ENCODE measurements at regions of chr10 and their contacts with region 1.

Region 1: DNA sequence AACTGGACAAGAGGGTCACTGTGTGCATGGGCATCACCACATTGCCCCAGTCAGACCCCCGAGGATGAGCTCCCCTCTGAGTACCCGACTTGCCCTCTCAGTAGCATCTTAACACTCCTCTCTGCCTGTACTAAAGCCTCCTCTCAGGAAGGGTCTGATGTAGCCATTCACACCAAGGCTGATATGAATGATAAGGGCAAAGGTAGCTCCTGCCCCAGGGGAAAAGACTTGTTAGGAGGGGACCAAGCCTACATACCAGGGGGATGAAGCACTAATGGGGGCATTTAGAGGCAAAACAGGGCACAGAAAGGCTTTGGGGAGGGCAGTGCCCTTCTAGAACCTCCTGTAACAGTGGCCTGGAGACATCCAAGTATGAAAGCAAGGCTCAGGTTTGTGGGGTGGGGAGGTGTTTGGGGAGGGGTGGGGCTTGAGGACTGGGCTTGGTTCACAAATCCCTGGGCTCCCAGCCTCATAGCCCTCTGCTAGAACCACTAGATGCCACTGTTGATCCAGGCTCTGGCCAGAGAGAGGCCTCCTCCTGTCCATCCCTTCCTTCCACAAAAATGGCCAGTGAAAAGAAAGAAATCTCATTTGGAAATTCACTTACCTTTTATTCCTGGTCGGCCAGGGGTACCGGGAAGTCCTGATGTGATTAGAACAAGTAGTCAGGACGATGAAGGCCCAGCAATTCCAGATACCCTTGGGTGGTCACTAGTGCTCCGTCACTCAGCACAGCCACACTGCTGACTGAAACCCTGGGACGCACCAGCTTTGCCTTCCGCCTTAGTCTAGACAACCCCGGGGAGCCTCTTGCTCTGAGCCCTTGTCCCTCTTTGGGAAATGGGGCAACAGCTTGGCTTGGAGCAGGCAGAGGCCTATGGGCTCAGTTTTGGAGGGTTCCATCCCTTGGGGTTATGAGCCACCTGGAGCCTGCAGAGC is 40.3 kb downstream of the COL17A1 start:
- DNase-seq: peak in 8 of 10 donors; percentile 25 to 74 (median 65)
- H3K4me3 ChIP-seq: no peak overlapping the region
- H3K27ac ChIP-seq: peak overlapping the region in 27 of 59 donors; percentile 3 to 76 (median 42)
- H3K27me3 ChIP-seq: no peaks in the 10 kb centered on the region
- CTCF ChIP-seq: peak in 55 of 56 donors; percentile 38 to 88 (median 71)

Region 2: GRCh38 chr10:104072786-104073185 is 27.4 kb after region 1 on chr10:
- intact Hi-C with region 1: loop called in 1 of 2 experiments (anchors 2 kb)
- DNase-seq: no peak
- H3K4me3 ChIP-seq: no peak overlapping the region
- H3K27ac ChIP-seq: no peak overlapping the region
- H3K27me3 ChIP-seq: no peaks in the 10 kb centered on the region
- CTCF ChIP-seq: no peak

Measured in dorsolateral prefrontal cortex (tissue), 120 donors.